Gastrocnemius medialis (tissue), 4 donors: ENCODE measurements at regions of chr13 and their contacts with region 1.

Region 1: DNA sequence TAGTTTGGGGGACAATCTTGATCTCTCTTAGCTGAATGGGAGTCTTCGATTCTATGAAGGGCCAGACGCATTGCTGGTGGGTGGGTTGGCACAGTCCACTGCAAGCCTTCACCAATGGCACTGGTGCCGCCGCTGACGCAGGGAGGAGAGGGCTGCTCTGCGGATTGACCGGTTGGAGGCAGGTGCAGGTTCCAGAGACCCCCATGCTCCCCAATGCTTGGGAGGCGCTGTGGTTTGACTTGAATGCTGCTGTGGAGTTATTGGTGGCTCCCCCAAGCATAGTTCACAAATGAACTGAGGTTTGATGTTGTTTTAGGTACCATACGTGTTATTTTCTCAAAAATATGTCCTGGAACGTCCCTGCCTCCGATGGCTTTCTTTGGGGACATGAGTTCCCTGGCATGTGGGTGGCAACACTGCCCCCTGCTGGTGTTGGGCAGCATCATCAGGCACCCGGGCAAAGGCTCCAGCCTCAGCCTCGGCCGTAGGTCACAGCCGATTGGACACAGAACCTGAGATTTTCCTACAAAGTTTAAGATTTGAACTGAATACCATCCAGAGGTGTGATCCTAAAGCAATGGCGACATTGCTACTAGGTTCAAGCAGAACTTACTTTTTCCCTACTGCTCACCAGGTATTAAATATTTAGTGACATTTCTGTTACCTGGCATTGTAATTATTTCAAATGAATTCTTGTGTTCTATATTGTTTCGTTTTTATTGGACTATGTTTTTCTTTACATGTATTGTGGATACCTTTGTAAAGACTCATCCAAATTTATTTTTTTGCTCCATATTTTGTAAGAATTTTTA is 95.5 kb downstream of the ANKRD10 start:
- DNase-seq: peak; percentile 45 to 68
- ATAC-seq: peak; percentile 87 to 94
- H3K4me3 ChIP-seq: no peak overlapping the region
- H3K27ac ChIP-seq: no peak overlapping the region
- H3K4me1 ChIP-seq: peaks cover 2 to 4% of the 10 kb centered on the region in 2 donors
- H3K27me3 ChIP-seq: no peaks in the 10 kb centered on the region
- CTCF ChIP-seq: peak; percentile 93 to 99 (median 96)
- POLR2A ChIP-seq: no peak

Region 2: DNA sequence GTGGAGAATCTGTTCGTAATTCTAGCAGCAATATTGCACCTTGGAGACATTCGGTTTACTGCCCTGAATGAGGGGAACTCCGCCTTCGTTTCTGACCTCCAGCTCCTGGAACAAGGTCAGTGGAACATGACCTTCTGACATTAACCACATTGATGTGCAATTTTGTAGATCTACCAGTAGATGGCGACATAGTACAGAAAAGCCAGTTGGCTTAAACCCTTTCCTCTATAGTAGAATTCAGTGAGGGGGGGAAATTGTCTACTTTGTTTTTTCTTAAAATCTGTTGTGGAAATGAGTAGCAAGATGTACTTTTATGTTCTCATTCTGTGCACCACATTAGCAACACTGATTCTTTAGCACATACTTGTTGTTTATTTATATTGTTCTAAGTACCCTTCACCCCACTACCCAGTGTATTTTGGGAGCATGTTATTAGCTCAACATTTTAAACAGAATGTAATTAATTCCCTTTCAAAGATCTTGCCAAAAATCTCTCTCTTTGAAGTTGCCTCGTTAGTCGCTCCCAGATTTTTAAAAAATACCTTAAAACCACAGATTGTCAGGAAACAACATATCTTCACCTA is 1857.8 kb before region 1 on chr13:
- in situ Hi-C with region 1: loop called in 1 of 4 experiments (anchors 25 kb)
- intact Hi-C with region 1: no loop called
- DNase-seq: no peak
- ATAC-seq: peak; percentile 79 to 89
- H3K4me3 ChIP-seq: no peak overlapping the region
- H3K27ac ChIP-seq: no peak overlapping the region
- H3K4me1 ChIP-seq: no peaks in the 10 kb centered on the region
- H3K27me3 ChIP-seq: no peaks in the 10 kb centered on the region
- CTCF ChIP-seq: peak; percentile 58 to 87 (median 75)
- POLR2A ChIP-seq: no peak

Region 3: DNA sequence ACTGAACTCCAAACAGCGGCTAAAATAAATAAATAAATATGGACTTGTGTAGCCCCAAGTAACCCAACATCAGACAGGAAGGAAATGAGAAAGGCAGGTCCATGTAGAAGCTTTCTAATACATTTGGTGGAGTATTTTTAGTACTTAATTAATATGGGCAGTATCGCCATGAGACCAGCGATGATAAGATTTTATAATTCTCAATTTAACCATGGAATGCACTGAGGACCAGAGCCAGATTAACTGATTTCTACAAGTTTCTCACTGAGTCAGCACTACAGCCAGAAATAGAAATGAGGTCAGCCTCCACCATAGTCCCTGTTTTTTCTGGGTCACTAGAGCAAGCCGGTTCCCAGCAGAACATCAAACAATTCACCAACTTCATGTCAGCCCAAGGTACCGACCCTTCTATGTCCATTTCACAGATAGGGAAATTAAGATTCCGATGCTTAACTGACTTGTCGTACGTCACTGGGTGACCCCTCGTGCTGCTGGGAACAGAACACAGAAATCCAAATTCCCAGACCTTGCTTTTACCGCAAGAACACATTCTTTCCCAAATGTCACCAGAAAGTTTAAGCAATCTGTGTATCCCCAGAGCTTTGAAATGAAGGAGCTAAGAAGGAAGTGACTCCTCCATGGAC is 602.9 kb before region 1 on chr13:
- in situ Hi-C with region 1: loop called in 1 of 4 experiments (anchors 25 kb)
- intact Hi-C with region 1: loop called (anchors 5 kb)
- DNase-seq: peak in 1 of 2 donors; percentile 45
- ATAC-seq: peak; percentile 70 to 71
- H3K4me3 ChIP-seq: peak overlapping the region in 1 of 4 donors; percentile 8
- H3K27ac ChIP-seq: peak overlapping the region; percentile 62 to 73 (median 68)
- H3K4me1 ChIP-seq: peaks cover 23 to 31% of the 10 kb centered on the region in 2 donors
- H3K27me3 ChIP-seq: no peaks in the 10 kb centered on the region
- CTCF ChIP-seq: no peak
- POLR2A ChIP-seq: no peak

Region 4: DNA sequence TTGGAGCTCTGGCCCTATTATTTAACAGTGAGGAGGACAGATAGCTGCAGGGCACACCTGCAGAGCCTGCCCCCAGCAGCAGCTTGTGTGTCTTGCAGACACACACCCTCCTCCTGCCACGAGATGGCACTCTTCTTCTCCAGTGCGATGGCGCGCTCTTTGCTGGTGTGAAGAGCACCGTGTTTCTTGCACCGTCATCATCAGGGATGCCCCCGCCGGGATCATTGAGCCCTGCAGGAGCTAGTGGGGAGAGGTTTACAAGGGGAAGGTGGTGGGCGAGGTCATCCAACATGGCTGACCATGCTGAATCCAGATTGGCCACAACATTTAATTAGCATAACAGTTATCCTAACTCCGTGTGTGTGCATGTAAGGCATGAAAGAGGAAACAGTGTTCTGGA is 363.5 kb before region 1 on chr13:
- in situ Hi-C with region 1: loop called in 1 of 4 experiments (anchors 25 kb)
- intact Hi-C with region 1: no loop called
- DNase-seq: peak; percentile 54 to 74
- ATAC-seq: peak; percentile 82 to 96
- H3K4me3 ChIP-seq: peak overlapping the region in 1 of 4 donors; percentile 27
- H3K27ac ChIP-seq: no peak overlapping the region
- H3K4me1 ChIP-seq: no peaks in the 10 kb centered on the region
- H3K27me3 ChIP-seq: no peaks in the 10 kb centered on the region
- CTCF ChIP-seq: peak; percentile 69 to 82 (median 74)
- POLR2A ChIP-seq: no peak

Region 5: DNA sequence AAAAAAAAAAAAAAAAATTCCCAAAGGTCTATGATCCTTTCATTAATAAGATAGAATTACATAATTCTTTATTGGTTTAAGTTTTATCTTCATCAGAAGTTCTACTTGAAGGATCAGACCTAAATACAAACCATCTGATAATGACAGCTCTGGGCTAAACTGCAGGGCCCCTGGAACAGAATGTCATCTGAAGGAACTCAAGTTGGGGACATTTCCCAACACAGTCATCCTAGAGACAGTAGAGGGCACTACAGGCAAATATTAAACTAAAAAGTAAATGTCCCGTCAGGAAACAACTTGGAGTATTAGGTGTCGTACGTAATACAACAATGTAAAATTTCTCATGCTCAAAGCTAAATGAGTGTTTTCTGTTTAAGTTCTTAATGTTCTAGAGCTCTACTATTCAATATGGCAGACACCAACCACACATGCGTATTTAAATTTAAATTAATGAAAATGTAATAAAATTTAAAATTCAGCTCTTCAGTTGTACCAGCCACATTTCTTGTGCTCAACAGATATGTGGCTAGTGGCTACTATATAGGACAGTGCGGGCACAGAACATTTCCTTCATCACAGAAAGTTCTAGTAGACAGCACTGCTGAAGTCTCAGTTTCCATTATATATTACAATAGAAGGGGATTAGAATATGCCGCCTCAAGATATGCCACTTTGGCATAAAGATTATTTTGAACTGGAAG is 225.8 kb before region 1 on chr13:
- in situ Hi-C with region 1: loop called (anchors 5 to 10 kb)
- intact Hi-C with region 1: loop called (anchors 1 kb)
- DNase-seq: no peak
- ATAC-seq: peak; percentile 96 to 99
- H3K4me3 ChIP-seq: no peak overlapping the region
- H3K27ac ChIP-seq: no peak overlapping the region
- H3K4me1 ChIP-seq: no peaks in the 10 kb centered on the region
- H3K27me3 ChIP-seq: no peaks in the 10 kb centered on the region
- CTCF ChIP-seq: peak; percentile 54 to 70 (median 65)
- POLR2A ChIP-seq: no peak

Region 6: GRCh38 chr13:110680851-110681250 is 138.6 kb before region 1 on chr13:
- in situ Hi-C with region 1: loop called in 1 of 4 experiments (anchors 25 kb)
- intact Hi-C with region 1: loop called (anchors 2 kb)
- DNase-seq: no peak
- ATAC-seq: no peak
- H3K4me3 ChIP-seq: no peak overlapping the region
- H3K27ac ChIP-seq: no peak overlapping the region
- H3K4me1 ChIP-seq: no peaks in the 10 kb centered on the region
- H3K27me3 ChIP-seq: no peaks in the 10 kb centered on the region
- CTCF ChIP-seq: peak in 2 of 5 experiments; percentile 19 to 39
- POLR2A ChIP-seq: no peak

Region 7: DNA sequence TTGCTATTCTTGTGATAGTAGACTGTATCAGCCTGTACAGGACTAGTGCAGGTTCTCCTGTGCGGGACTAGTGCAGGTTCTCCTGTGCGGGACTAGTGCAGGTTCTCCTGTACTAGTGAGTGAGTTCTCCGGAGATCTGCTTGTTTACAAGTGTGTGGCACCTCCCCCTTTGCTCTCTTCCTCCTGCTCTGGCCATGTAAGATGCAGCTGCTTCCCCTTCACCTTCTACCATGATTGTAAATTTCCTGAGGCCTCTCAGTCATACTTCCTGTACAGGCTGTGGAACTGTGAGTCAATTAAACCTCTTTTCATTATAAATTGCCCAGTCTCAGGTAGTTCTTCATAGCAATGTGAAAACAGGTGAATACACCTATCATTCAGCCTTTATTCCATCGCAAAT is 790.7 kb after region 1 on chr13:
- in situ Hi-C with region 1: no loop called
- intact Hi-C with region 1: no loop called
- DNase-seq: no peak
- ATAC-seq: no peak
- H3K4me3 ChIP-seq: no peak overlapping the region
- H3K27ac ChIP-seq: no peak overlapping the region
- H3K4me1 ChIP-seq: no peaks in the 10 kb centered on the region
- H3K27me3 ChIP-seq: no peaks in the 10 kb centered on the region
- CTCF ChIP-seq: no peak
- POLR2A ChIP-seq: no peak